Caco-2 (cell line): ENCODE measurements at regions of chr10 and their contacts with region 1.

Region 1: DNA sequence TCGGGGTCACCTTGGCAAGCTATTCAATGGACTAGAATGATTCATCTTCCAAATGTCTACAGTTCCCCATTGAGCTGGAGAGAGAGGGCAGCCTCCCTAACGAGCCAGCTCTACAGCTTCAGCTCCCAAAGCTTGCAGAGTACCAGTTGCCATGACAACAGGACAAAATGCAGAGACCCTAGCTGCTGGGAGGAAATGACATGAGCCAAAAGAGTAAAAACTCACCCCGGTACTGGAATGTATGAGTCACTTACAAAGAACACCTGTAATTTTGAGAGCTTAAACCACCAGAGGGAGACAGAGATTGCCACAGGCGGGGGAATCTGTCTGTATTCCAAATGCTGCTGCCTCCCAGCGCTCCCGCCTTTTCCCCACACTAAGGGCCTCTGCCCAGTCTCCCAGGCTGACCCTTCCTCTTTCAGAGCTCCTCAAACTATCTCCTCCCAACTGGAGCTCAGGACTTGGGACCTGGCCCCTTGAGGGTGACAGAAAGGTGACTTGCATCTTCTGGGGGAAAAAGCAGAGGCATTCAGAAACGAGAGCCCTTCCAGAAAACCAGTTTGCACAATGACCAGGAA is 95.5 kb downstream of the CUL2 start:
- DNase-seq: peak; percentile 85 to 89
- H3K4me3 ChIP-seq: no peak overlapping the region
- H3K4me3 Mint-ChIP-seq: no peak overlapping the region
- H3K27ac Mint-ChIP-seq: peak overlapping the region; percentile 51
- H3K4me1 ChIP-seq: peaks cover 27% of the 10 kb centered on the region
- H3K4me1 Mint-ChIP-seq: peaks cover 23% of the 10 kb centered on the region
- H3K27me3 ChIP-seq: no peaks in the 10 kb centered on the region
- H3K27me3 Mint-ChIP-seq: no peaks in the 10 kb centered on the region
- CTCF ChIP-seq: peak; percentile 88 to 96

Region 2: DNA sequence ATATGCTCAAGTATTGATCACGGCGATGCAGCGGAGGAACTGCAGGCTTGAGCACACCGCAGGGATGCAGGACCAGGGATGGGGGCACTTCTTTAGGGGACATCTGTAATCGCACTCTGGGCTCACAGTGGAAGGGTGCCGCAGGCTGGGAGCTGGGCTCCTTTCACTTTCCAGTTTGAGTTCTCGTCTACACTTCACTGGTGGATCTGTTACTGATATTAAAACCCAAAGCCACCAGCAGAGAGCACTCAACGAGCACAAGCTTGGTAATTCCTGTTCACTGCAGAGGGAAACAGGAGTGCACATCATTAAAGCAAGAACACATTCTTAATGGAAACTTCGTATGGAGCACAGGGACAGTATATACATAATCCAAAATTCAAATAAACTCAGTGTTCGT is 270.9 kb before region 1 on chr10:
- CTCF ChIA-PET with region 1: interaction called, 10 read pairs
- POLR2A ChIA-PET with region 1: no interaction called
- intact Hi-C with region 1: loop called (anchors 5 kb)
- DNase-seq: peak in 1 of 2 experiments; percentile 51
- H3K4me3 ChIP-seq: no peak overlapping the region
- H3K4me3 Mint-ChIP-seq: no peak overlapping the region
- H3K27ac Mint-ChIP-seq: no peak overlapping the region
- H3K4me1 ChIP-seq: peaks cover 25% of the 10 kb centered on the region
- H3K4me1 Mint-ChIP-seq: peaks cover 26% of the 10 kb centered on the region
- H3K27me3 ChIP-seq: no peaks in the 10 kb centered on the region
- H3K27me3 Mint-ChIP-seq: no peaks in the 10 kb centered on the region
- CTCF ChIP-seq: peak; percentile 31 to 66

Region 3: GRCh38 chr10:34743814-34744213 is 250.8 kb before region 1 on chr10:
- CTCF ChIA-PET with region 1: no interaction called
- POLR2A ChIA-PET with region 1: no interaction called
- intact Hi-C with region 1: no loop called
- DNase-seq: no peak
- H3K4me3 ChIP-seq: no peak overlapping the region
- H3K4me3 Mint-ChIP-seq: no peak overlapping the region
- H3K27ac Mint-ChIP-seq: no peak overlapping the region
- H3K4me1 ChIP-seq: peaks cover 23% of the 10 kb centered on the region
- H3K4me1 Mint-ChIP-seq: peaks cover 28% of the 10 kb centered on the region
- H3K27me3 ChIP-seq: no peaks in the 10 kb centered on the region
- H3K27me3 Mint-ChIP-seq: no peaks in the 10 kb centered on the region
- CTCF ChIP-seq: no peak

Region 4: GRCh38 chr10:34885898-34886297 is 108.8 kb before region 1 on chr10:
- CTCF ChIA-PET with region 1: no interaction called
- POLR2A ChIA-PET with region 1: no interaction called
- intact Hi-C with region 1: no loop called
- DNase-seq: no peak
- H3K4me3 ChIP-seq: no peak overlapping the region
- H3K4me3 Mint-ChIP-seq: no peak overlapping the region
- H3K27ac Mint-ChIP-seq: no peak overlapping the region
- H3K4me1 ChIP-seq: 0 out of 2 replicates have a peak, but pooled peaks cover 6% of the 10 kb centered on the region
- H3K4me1 Mint-ChIP-seq: no peaks in the 10 kb centered on the region
- H3K27me3 ChIP-seq: no peaks in the 10 kb centered on the region
- H3K27me3 Mint-ChIP-seq: no peaks in the 10 kb centered on the region
- CTCF ChIP-seq: no peak

Region 5: GRCh38 chr10:35027567-35027966 is 32.9 kb after region 1 on chr10:
- CTCF ChIA-PET with region 1: interaction called, 22 read pairs
- POLR2A ChIA-PET with region 1: no interaction called
- intact Hi-C with region 1: loop called (anchors 1 kb)
- DNase-seq: no peak
- H3K4me3 ChIP-seq: no peak overlapping the region
- H3K4me3 Mint-ChIP-seq: no peak overlapping the region
- H3K27ac Mint-ChIP-seq: no peak overlapping the region
- H3K4me1 ChIP-seq: no peaks in the 10 kb centered on the region
- H3K4me1 Mint-ChIP-seq: no peaks in the 10 kb centered on the region
- H3K27me3 ChIP-seq: no peaks in the 10 kb centered on the region
- H3K27me3 Mint-ChIP-seq: no peaks in the 10 kb centered on the region
- CTCF ChIP-seq: peak; percentile 50 to 51

Region 6: GRCh38 chr10:35195361-35196306 is 201.0 kb after region 1 on chr10:
- CTCF ChIA-PET with region 1: interaction called, 22 read pairs
- POLR2A ChIA-PET with region 1: no interaction called
- intact Hi-C with region 1: loop called (anchors 2 kb)
- DNase-seq: peak; percentile 84 to 85
- H3K4me3 ChIP-seq: peak overlapping the region; percentile 37
- H3K4me3 Mint-ChIP-seq: peak overlapping the region; percentile 70
- H3K27ac Mint-ChIP-seq: peak overlapping the region; percentile 77
- H3K4me1 ChIP-seq: peaks cover 4% of the 10 kb centered on the region; the same call in 1 of the 2 replicates
- H3K4me1 Mint-ChIP-seq: peaks cover 7% of the 10 kb centered on the region
- H3K27me3 ChIP-seq: no peaks in the 10 kb centered on the region
- H3K27me3 Mint-ChIP-seq: no peaks in the 10 kb centered on the region
- CTCF ChIP-seq: peak; percentile 92 to 96